ENCODE measurements at regions of chr19 and their contacts with region 1.

Region 1: DNA sequence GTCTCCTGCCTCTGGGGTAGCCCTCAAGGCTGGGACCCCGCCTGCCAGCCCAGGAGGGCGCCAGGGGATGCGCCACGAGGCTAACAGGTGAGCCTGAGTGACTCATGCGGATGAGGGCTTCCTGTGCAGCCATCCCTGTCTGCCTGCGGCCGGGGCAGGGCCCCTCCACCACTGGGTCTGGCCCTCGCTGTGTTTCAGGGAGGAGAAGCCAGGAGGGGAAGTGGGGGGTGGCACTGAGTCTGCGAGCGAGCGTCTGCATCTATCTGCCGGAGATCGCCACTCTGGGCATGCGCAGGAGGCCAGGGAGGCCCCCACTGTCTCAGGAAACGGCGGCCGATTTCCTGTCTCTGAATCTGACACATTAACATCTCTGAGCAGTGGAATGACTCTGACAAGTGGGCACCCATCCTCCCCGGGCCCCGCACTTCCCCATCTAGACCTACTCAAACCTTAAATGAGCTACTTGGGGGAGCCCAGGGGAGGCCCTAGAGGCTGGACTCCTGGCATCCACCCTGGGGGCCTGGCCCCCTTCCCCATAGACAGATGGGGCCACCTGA is 19.7 kb downstream of the RFX1 start:
- DNase-seq: peak; percentile 96 to 99 (median 98)
- ATAC-seq: peak; percentile 85 to 87
- H3K4me3 Mint-ChIP-seq: peak overlapping the region; percentile 61 to 84 (median 71)
- H3K27ac Mint-ChIP-seq: peak overlapping the region; percentile 91 to 99 (median 96)
- H3K4me1 Mint-ChIP-seq: peaks cover 33 to 91% (median 84%) of the 10 kb centered on the region in 4 donors
- H3K27me3 Mint-ChIP-seq: no peaks in the 10 kb centered on the region

Region 2: GRCh38 chr19:14006243-14006765 is 19.9 kb after region 1 on chr19 and contains the start of gene RFX1:
- POLR2A ChIA-PET with region 1: interaction called, 481 read pairs
- DNase-seq: peak; percentile 99 to 100 (median 100)
- ATAC-seq: peak; percentile 74 to 76
- H3K4me3 Mint-ChIP-seq: peak within 1 kb of the TSS; percentile 81 to 98 (median 91)
- H3K27ac Mint-ChIP-seq: peak within 1 kb of the TSS; percentile 95 to 100 (median 99)
- H3K4me1 Mint-ChIP-seq: peaks cover 18 to 49% (median 45%) of the 10 kb centered on the region in 4 donors
- H3K27me3 Mint-ChIP-seq: peaks cover 0 to 2% (median 0%) of the 10 kb centered on the region in 5 donors
- polyA plus RNA-seq, gene RFX1: 0.84 to 1.1 (median 1.0) TPM

Measured in naive thymus-derived CD8-positive, alpha-beta T cell (primary cell).